A673 (cell line): ENCODE measurements at regions of chr2 and their contacts with region 1.

Region 1: GRCh38 chr2:223797811-223798721 is 39.3 kb downstream of the AP1S3 start:
- DNase-seq: peak; percentile 81
- H3K4me3 ChIP-seq: no peak overlapping the region
- H3K27ac ChIP-seq: no peak overlapping the region
- H3K4me1 ChIP-seq: peaks cover 11% of the 10 kb centered on the region
- H3K27me3 ChIP-seq: no peaks in the 10 kb centered on the region
- CTCF ChIP-seq: peak; percentile 85

Region 2: GRCh38 chr2:222915092-222915957 is 882.7 kb before region 1 on chr2:
- CTCF ChIA-PET with region 1: no interaction called
- POLR2A ChIA-PET with region 1: no interaction called
- intact Hi-C with region 1: loop called (anchors 5 kb)
- DNase-seq: peak; percentile 37
- H3K4me3 ChIP-seq: no peak overlapping the region
- H3K27ac ChIP-seq: no peak overlapping the region
- H3K4me1 ChIP-seq: peaks cover 45% of the 10 kb centered on the region
- H3K27me3 ChIP-seq: no peaks in the 10 kb centered on the region
- CTCF ChIP-seq: peak; percentile 69

Region 3: DNA sequence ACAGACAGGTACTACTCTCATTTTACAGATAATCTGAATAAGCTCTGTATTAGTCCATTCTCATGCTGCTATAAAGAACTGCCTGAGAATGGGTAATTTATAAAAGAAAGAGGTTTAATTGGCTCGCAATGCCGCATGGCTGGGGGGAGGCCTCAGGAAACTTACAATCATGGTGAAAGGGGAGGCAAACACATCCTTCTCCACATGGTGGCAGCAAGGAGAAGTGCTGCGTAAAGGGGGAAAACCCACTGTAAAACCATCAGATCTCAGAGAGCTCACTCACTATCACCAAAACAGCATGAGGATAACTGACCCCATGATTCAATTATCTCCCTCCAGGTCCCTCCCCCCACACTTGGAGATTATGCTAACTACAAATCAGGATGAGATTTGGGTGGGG is 491.7 kb before region 1 on chr2:
- CTCF ChIA-PET with region 1: interaction called, 3 read pairs
- POLR2A ChIA-PET with region 1: no interaction called
- intact Hi-C with region 1: loop called (anchors 10 kb)
- DNase-seq: peak; percentile 74
- H3K4me3 ChIP-seq: no peak overlapping the region
- H3K27ac ChIP-seq: no peak overlapping the region
- H3K4me1 ChIP-seq: no peaks in the 10 kb centered on the region
- H3K27me3 ChIP-seq: no peaks in the 10 kb centered on the region
- CTCF ChIP-seq: peak; percentile 74

Region 4: GRCh38 chr2:223688094-223688835 is 109.8 kb before region 1 on chr2:
- CTCF ChIA-PET with region 1: no interaction called
- POLR2A ChIA-PET with region 1: no interaction called
- intact Hi-C with region 1: loop called (anchors 5 kb)
- DNase-seq: no peak
- H3K4me3 ChIP-seq: no peak overlapping the region
- H3K27ac ChIP-seq: peak overlapping the region; percentile 38
- H3K4me1 ChIP-seq: peaks cover 34% of the 10 kb centered on the region
- H3K27me3 ChIP-seq: no peaks in the 10 kb centered on the region
- CTCF ChIP-seq: no peak

Region 5: GRCh38 chr2:223822818-223823217 is 24.8 kb after region 1 on chr2:
- CTCF ChIA-PET with region 1: no interaction called
- POLR2A ChIA-PET with region 1: no interaction called
- intact Hi-C with region 1: no loop called
- DNase-seq: no peak
- H3K4me3 ChIP-seq: no peak overlapping the region
- H3K27ac ChIP-seq: no peak overlapping the region
- H3K4me1 ChIP-seq: peaks cover 3% of the 10 kb centered on the region
- H3K27me3 ChIP-seq: no peaks in the 10 kb centered on the region
- CTCF ChIP-seq: no peak